Endothelial cell of umbilical vein (primary cell): ENCODE measurements at regions of chr20 and their contacts with region 1.

Region 1: DNA sequence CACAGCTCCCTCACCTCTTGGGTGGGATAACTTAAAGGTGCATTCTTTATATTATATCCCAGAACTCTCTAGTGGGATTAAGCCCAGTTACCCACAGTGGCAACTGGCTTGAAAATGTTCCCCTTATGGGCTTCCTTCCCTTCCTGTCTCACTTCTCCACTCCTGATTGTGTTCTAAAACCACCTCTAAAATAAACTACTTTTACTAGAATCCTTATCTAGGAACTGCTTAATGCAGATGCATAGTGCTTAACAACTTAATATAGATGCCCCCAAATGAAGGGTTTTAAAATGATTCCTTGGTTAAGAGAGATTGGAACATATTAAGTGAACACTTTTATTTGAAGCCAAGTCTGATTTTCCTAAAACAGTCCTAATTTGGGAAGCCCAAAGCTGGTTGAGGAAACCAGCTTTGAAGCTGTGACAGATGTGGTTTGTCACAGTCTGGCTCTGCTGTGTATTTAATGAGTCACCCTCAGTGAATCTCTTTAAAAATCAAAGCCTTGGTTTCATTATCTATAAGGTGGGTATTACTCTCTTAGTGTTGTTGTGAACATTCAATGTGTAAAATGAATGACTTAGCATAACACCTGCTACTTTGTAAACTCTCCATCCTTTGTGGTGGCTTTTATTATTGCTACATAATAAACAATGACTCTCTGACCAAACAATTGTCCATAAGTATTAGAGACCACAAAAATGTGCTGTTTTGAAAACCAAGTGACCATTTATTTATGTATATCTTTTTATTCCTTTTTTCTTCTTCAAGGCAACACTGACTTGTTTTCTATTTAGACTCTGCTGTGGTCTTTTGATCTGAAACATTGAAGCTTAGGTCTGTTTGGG is 24.4 kb downstream of the PLCB1 start:
- DNase-seq: peak; percentile 64
- H3K4me3 ChIP-seq: no peak overlapping the region
- H3K27ac ChIP-seq: peak overlapping the region; percentile 84
- H3K4me1 ChIP-seq: peaks cover 64% of the 10 kb centered on the region
- H3K27me3 ChIP-seq: no peaks in the 10 kb centered on the region
- CTCF ChIP-seq: no peak
- POLR2A ChIP-seq: no peak

Region 2: DNA sequence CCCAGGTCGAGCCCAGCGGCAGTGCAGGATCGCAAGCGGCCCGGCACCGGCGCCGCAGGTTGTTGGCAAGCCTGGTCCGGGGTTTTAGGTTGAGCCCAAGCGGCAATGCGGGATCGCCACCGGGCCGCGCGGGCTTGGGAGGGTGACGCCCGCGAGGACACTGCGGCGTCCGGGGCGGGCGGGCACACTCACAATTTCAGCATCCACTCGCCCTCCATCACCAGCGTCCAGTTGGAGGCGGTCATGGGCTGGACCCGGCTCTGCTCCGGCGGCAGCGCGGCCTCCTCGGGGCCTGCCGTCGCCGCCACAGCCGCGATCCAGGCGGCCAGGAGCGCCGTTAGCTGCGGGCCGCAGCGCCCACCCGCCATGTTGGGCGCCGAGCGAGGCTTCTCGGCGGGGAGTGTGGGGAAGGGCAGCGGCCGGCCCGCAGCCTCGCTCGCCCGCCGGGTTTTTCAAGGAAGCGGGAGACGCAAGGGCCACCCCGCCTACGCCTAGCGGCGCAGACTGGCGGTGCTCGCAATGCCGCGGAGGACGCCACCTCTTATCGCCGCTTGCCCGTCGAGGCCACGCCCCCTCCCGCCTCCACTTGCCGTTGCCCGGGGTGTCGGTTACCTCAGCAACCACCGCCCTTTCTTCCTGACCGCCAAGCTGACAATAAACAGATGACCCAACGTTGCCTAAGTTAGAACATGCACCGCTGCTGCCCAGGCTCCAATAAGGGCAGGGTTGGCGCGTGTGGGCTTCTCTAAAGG is 137.0 kb before region 1 on chr20 and contains the start of gene TMX4:
- CTCF ChIA-PET with region 1: no interaction called
- POLR2A ChIA-PET with region 1: no interaction called
- dilution Hi-C with region 1: no loop called
- intact Hi-C with region 1: no loop called
- DNase-seq: peak; percentile 97
- H3K4me3 ChIP-seq: peak within 1 kb of the TSS; percentile 76 to 88 (median 82)
- H3K27ac ChIP-seq: peak within 1 kb of the TSS; percentile 64
- H3K4me1 ChIP-seq: peaks cover 8% of the 10 kb centered on the region
- H3K27me3 ChIP-seq: no peaks in the 10 kb centered on the region
- CTCF ChIP-seq: peak; percentile 13 to 74
- POLR2A ChIP-seq: peak; percentile 95
- total RNA-seq, gene TMX4: 26.9 and 30.3 TPM in 2 replicates

Region 3: GRCh38 chr20:8208998-8209440 is 52.6 kb after region 1 on chr20:
- CTCF ChIA-PET with region 1: no interaction called
- POLR2A ChIA-PET with region 1: no interaction called
- dilution Hi-C with region 1: no loop called
- intact Hi-C with region 1: loop called (anchors 5 kb)
- DNase-seq: peak; percentile 14
- H3K4me3 ChIP-seq: no peak overlapping the region
- H3K27ac ChIP-seq: no peak overlapping the region
- H3K4me1 ChIP-seq: peaks cover 15% of the 10 kb centered on the region
- H3K27me3 ChIP-seq: no peaks in the 10 kb centered on the region
- CTCF ChIP-seq: no peak
- POLR2A ChIP-seq: no peak

Region 4: DNA sequence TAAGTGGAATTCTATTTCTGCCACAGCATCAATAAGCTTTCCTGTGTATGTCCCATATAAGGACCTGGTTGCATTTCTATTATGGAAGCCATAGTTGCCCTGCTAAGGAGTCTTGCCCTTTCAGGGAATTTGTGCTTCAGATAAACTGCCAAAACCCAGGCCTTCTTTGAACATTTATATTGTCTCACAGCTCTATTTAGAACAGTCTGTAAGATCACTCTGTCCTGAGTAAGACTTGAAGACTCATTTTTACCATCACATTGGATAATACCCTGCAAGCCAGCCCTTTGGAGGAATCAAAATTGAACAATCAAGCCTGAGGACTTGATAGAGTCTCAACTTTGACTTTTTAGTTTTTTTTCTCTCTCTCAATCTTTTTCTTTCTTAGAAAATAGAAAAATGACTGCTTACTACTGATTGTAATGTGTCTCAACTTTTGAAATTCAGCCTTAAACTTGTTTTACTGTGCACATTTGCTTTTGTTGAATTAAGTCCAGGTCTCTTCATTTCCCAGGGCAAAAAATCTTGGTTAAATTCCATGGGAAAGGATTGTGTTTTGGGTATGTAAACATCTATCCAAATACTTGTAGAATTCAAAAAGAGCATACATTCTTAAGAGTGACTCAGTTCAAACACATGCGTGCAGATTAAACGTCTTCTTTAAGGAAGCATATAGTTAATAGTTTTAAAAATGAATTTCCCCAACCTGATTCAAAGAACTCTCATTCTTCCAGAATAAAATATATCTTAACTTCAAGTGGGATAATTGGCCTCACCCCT is 66.8 kb after region 1 on chr20:
- CTCF ChIA-PET with region 1: no interaction called
- POLR2A ChIA-PET with region 1: no interaction called
- dilution Hi-C with region 1: no loop called
- intact Hi-C with region 1: no loop called
- DNase-seq: peak; percentile 71
- H3K4me3 ChIP-seq: no peak overlapping the region
- H3K27ac ChIP-seq: no peak overlapping the region
- H3K4me1 ChIP-seq: peaks cover 10% of the 10 kb centered on the region
- H3K27me3 ChIP-seq: no peaks in the 10 kb centered on the region
- CTCF ChIP-seq: no peak
- POLR2A ChIP-seq: no peak

Region 5: DNA sequence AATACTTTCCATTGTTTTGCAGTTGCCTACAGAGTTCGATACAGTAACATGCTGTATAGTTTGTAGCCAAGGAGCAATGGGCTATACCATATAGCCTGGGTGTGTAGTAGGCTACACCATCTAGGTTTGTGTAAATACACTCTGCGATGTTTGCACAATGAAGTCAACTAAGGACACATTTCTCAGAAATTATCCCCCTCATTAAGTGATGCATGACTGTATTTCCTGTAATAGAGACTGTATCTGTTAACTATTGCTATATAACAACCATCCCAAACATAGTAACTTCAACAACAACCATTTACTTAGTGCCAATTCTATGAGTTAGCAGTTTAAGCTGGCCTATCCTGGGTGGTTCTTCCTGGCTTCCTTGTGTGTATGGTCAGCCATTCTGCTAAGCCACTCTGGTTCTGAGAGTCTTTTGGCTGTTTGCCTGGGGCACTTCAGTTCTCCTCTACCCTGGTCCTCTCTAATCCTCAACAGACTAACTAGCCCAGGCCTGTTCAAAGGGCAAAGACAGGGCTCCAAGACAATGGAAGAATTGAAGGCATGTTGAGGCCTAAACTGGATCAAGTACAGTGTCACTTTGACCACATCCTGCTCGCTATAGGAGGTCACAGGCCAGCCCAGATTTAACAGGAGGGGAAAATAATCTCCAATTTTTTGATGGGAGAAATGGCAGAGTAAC is 99.6 kb after region 1 on chr20:
- CTCF ChIA-PET with region 1: no interaction called
- POLR2A ChIA-PET with region 1: no interaction called
- dilution Hi-C with region 1: no loop called
- intact Hi-C with region 1: loop called (anchors 5 kb)
- DNase-seq: no peak
- H3K4me3 ChIP-seq: no peak overlapping the region
- H3K27ac ChIP-seq: no peak overlapping the region
- H3K4me1 ChIP-seq: peaks cover 5% of the 10 kb centered on the region
- H3K27me3 ChIP-seq: no peaks in the 10 kb centered on the region
- CTCF ChIP-seq: no peak
- POLR2A ChIP-seq: no peak